ENCODE measurements at regions of chr1 and their contacts with region 1.

Region 1: GRCh38 chr1:147890177-147890790 is 12.3 kb upstream of the GJA8 start:
- DNase-seq: peak; percentile 85
- H3K4me3 Mint-ChIP-seq: no peak overlapping the region
- H3K27ac Mint-ChIP-seq: peak overlapping the region; percentile 44
- H3K4me1 Mint-ChIP-seq: peaks cover 6% of the 10 kb centered on the region
- H3K27me3 Mint-ChIP-seq: no peaks in the 10 kb centered on the region
- CTCF ChIP-seq: peak; percentile 66

Region 2: GRCh38 chr1:147099192-147099591 is 791.1 kb before region 1 on chr1:
- CTCF ChIA-PET with region 1: no interaction called
- POLR2A ChIA-PET with region 1: no interaction called
- intact Hi-C with region 1: no loop called
- DNase-seq: no peak
- H3K4me3 Mint-ChIP-seq: no peak overlapping the region
- H3K27ac Mint-ChIP-seq: no peak overlapping the region
- H3K4me1 Mint-ChIP-seq: no peaks in the 10 kb centered on the region
- H3K27me3 Mint-ChIP-seq: no peaks in the 10 kb centered on the region
- CTCF ChIP-seq: no peak

Region 3: DNA sequence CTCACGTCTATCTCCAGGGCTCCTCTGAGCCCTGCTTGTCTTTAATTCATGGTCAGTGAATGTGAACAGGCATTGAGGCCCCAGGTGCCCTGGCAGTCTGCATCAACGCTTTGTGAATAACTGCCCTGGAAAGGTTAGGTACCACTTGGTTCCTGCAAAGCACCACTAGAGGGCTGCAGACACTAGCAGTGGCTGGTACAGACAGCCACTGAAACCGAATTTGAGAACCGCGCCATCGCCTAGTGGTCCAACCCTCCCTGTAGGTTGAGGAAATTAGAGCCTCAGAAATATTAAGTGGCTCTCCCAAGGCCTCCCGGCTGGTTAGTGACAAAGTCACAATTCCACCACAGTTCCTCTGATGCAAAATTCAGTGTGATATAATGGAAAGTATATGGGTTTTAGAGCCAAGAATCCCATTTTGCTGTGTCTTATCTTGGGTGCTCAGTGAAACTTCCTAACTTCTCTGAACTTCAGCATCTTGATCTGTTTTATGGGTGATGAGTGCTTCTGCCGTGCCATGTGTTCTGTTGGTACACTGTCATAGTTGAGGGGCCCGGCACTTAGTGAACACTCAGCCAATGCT is 395.2 kb before region 1 on chr1:
- CTCF ChIA-PET with region 1: interaction called, 45 read pairs
- POLR2A ChIA-PET with region 1: interaction called, 3 read pairs
- intact Hi-C with region 1: loop called (anchors 1 kb)
- DNase-seq: peak; percentile 81
- H3K4me3 Mint-ChIP-seq: no peak overlapping the region
- H3K27ac Mint-ChIP-seq: no peak overlapping the region
- H3K4me1 Mint-ChIP-seq: no peaks in the 10 kb centered on the region
- H3K27me3 Mint-ChIP-seq: peaks cover 60% of the 10 kb centered on the region
- CTCF ChIP-seq: peak; percentile 97

Region 4: DNA sequence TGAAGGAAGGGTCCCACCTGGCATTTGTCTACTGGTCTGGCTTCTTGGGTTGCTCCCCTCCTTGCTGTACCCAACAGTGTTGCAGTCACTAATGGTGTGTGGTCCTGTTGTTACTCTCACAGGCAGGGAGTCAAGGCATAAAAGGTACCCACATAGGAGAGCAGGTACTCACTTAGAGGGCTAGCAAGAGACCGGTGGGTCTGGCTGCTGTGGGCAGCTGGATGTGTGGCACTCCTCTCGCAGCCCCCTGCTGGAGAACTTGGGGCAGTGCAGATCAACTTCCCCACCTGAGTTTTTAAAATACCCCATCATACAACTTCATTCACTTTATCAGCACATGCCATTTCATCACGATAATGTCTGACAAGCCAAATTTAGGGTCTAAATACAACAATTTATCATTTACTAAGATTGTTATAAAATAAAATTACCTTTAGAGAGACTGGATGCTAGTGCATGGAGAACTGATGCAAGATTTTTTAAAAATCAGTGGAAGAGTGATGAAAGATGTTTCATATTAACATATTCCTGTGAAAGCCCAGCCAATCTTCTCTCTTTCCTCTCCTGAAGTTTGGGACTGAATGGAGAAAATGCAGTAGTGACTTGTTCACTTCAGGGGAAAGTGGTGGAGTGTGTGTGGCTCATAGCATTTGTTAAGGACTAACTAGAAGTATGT is 262.7 kb before region 1 on chr1:
- CTCF ChIA-PET with region 1: interaction called, 14 read pairs
- POLR2A ChIA-PET with region 1: no interaction called
- intact Hi-C with region 1: loop called (anchors 5 kb)
- DNase-seq: peak; percentile 65
- H3K4me3 Mint-ChIP-seq: no peak overlapping the region
- H3K27ac Mint-ChIP-seq: no peak overlapping the region
- H3K4me1 Mint-ChIP-seq: no peaks in the 10 kb centered on the region
- H3K27me3 Mint-ChIP-seq: no peaks in the 10 kb centered on the region
- CTCF ChIP-seq: peak; percentile 95

Region 5: DNA sequence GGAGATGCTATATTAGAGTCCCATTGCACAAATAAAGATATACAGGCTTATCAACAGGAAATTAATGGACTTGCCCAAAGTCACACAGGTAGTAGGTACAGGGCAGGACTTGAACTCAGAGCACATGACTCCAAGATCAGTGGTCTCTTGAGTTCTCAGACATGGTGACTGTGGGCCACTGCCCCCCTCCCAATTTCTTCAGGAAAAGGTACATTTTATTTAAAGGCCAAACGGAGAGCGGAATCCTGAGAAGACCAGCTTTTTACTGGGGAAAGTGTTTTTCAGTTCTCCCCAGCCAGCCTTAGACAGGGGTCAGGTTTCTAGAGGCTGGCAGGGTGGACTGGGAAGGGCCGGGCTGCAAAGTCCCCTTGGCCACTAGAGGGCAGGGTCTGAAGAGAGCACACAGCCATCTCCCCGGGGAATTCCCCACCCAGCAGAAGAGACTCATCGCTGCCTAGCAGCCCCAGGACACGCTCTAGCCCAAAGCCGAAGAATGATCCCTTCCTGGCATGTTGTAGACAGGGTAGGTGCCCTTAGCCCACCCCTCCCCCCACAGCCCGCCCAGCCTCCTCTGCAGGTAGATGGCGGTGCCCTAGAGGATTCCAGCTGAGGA is 249.6 kb before region 1 on chr1:
- CTCF ChIA-PET with region 1: interaction called, 132 read pairs
- POLR2A ChIA-PET with region 1: no interaction called
- intact Hi-C with region 1: loop called (anchors 1 kb)
- DNase-seq: peak; percentile 90
- H3K4me3 Mint-ChIP-seq: no peak overlapping the region
- H3K27ac Mint-ChIP-seq: no peak overlapping the region
- H3K4me1 Mint-ChIP-seq: peaks cover 4% of the 10 kb centered on the region
- H3K27me3 Mint-ChIP-seq: no peaks in the 10 kb centered on the region
- CTCF ChIP-seq: peak; percentile 96

Region 6: DNA sequence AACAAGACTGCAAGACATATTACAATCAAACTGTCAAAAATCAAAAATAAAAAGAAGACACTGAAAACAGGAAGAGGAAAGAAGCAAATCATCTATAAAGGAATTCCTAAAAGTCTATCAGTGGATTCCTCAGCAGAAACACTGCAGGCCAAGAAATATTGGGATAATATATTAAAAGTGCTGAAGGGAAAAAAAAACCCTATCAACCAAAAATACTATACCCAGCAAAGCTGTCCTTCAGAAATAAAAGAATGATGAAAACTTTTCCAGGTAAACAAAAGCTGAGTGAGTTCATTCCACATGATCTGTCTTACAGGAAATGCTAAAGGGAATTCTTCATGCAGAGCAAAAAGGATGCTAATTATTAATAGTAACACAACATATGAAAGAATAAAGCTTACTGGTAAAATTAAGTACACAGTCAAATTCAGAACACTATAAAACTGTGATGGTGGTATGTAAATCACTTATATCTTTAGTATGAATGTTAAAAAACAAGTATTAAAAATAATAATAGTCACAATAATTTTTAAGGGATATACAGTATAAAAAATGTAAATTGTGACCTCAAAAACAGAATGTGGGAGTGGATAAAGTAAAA is 207.0 kb before region 1 on chr1:
- CTCF ChIA-PET with region 1: interaction called, 11 read pairs
- POLR2A ChIA-PET with region 1: no interaction called
- intact Hi-C with region 1: no loop called
- DNase-seq: no peak
- H3K4me3 Mint-ChIP-seq: no peak overlapping the region
- H3K27ac Mint-ChIP-seq: no peak overlapping the region
- H3K4me1 Mint-ChIP-seq: no peaks in the 10 kb centered on the region
- H3K27me3 Mint-ChIP-seq: peaks cover 13% of the 10 kb centered on the region
- CTCF ChIP-seq: no peak

Region 7: DNA sequence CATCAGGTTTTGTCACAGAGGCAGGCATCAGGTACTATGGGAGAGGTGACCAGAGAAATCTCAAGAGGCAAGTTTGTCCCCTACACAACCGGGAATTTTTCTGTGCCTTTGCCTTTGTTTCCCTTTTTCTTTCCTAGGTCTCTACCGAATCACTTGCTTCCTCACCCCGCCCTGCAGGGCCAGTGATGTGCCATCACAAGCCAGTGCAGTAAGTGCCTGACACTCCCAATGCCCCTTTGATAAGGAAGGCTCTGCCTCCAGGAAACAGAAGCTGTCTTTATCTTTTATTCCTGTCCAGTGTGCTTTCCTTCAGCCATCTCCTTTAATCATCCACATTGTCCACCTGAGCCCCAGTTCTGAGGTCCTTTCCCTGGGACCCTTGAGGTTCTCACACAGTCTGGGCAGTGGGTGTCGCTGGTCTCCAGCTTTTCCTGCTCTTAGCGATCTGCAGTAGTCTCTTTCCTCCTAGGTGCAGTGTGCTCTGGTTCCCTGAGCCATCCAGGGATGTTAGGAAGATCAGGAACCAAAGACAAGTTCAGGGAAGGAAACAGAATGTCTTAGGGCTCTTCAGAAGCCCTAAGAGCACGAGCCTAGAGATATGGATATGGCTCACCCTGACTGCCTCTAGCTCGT is 166.5 kb before region 1 on chr1:
- CTCF ChIA-PET with region 1: interaction called, 149 read pairs
- POLR2A ChIA-PET with region 1: interaction called, 8 read pairs
- intact Hi-C with region 1: loop called (anchors 1 kb)
- DNase-seq: peak; percentile 72
- H3K4me3 Mint-ChIP-seq: no peak overlapping the region
- H3K27ac Mint-ChIP-seq: no peak overlapping the region
- H3K4me1 Mint-ChIP-seq: peaks cover 16% of the 10 kb centered on the region
- H3K27me3 Mint-ChIP-seq: no peaks in the 10 kb centered on the region
- CTCF ChIP-seq: peak; percentile 51